B cell (primary cell): ENCODE measurements at regions of chr4 and their contacts with region 1.

Region 1: DNA sequence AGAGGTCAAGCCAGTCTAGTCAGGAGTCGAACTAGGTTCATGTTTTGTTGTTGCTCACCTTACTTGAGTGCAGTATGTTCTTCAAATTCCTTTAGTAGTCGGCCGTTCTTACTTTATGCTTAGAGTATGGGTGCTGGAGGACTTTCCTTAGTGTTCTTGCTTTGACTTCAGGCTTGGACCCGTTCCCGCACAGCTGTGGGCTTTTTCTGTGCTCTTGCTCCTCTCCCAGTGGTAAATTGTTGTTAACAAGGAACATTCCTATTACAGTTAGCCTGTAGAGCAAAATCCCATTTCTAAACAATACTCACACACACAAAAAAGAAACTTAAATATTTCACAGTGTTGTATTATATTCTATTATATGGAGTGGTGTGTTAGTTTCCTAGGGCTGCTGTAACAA is 113.5 kb downstream of the RAP1GDS1 start:
- DNase-seq: no peak
- ATAC-seq: no peak
- H3K4me3 ChIP-seq: no peak overlapping the region
- H3K4me3 Mint-ChIP-seq: no peak overlapping the region
- H3K27ac ChIP-seq: no peak overlapping the region
- H3K27ac Mint-ChIP-seq: no peak overlapping the region
- H3K4me1 ChIP-seq: peaks cover 0 to 5% of the 10 kb centered on the region in 2 donors
- H3K4me1 Mint-ChIP-seq: peaks cover 5% of the 10 kb centered on the region
- H3K27me3 ChIP-seq: no peaks in the 10 kb centered on the region
- H3K27me3 Mint-ChIP-seq: no peaks in the 10 kb centered on the region
- CTCF ChIP-seq: no peak

Region 2: DNA sequence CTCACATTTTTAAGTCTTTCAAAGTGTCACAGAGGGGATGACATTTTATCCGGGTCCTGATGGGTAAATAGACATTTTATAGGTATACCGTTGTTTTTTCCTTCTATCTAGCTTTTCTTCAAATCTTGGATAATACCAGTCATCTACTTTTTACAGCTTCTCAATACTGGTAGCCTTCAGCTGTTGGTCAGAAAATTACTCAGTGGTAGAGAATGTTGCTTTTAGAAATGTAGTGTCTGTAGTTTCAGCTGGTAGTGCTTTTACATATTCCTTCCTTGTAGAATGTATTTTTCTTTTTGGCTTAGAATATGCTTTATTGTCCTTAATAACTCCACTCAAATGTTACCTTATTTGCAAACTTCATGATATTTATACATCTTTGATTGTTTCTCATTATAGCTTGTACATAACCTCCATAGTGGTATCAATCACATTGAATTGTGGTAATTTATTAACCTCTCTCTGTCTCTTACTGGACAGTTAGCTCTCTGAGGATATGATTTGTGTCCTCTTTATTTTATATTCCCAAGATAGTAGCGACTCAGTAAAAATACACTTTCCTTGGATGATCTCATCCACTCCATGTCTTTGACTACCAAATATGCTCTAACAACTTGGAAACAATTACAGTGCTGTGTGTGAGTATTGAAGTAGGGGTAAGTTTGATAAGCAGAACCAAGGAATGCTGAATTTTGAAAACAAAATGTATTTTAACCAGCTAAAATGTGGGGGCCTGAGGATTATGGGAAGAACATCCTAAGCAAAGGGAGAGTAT is 59.7 kb before region 1 on chr4:
- CTCF ChIA-PET with region 1: no interaction called
- POLR2A ChIA-PET with region 1: no interaction called
- intact Hi-C with region 1: no loop called
- DNase-seq: no peak
- ATAC-seq: no peak
- H3K4me3 ChIP-seq: no peak overlapping the region
- H3K4me3 Mint-ChIP-seq: no peak overlapping the region
- H3K27ac ChIP-seq: no peak overlapping the region
- H3K27ac Mint-ChIP-seq: no peak overlapping the region
- H3K4me1 ChIP-seq: peaks cover 9% of the 10 kb centered on the region in 2 donors
- H3K4me1 Mint-ChIP-seq: no peaks in the 10 kb centered on the region
- H3K27me3 ChIP-seq: no peaks in the 10 kb centered on the region
- H3K27me3 Mint-ChIP-seq: no peaks in the 10 kb centered on the region
- CTCF ChIP-seq: no peak

Region 3: DNA sequence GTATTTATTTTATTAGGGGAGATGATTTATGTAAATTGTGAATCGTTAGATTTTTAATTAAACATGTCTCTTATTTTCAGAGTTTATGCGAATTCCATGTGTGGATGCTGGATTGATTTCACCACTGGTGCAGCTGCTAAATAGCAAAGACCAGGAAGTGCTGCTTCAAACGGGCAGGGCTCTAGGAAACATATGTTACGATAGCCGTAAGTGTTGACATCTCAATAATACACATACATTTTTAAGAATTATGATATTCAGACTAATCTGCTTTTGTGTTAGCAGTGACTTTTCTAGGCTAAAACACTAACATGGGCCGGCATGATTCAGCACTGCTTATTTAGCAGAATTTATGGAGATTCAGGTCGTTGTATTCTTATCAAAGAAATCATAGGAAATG is 22.2 kb before region 1 on chr4:
- CTCF ChIA-PET with region 1: no interaction called
- POLR2A ChIA-PET with region 1: interaction called, 10 read pairs
- intact Hi-C with region 1: no loop called
- DNase-seq: peak; percentile 8
- ATAC-seq: no peak
- H3K4me3 ChIP-seq: peak overlapping the region in 3 of 5 experiments; percentile 28 to 50 (median 37)
- H3K4me3 Mint-ChIP-seq: peak overlapping the region; percentile 75
- H3K27ac ChIP-seq: peak overlapping the region in 1 of 2 donors; percentile 50
- H3K27ac Mint-ChIP-seq: peak overlapping the region; percentile 8
- H3K4me1 ChIP-seq: peaks cover 0 to 10% of the 10 kb centered on the region in 2 donors
- H3K4me1 Mint-ChIP-seq: peaks cover 22% of the 10 kb centered on the region
- H3K27me3 ChIP-seq: no peaks in the 10 kb centered on the region
- H3K27me3 Mint-ChIP-seq: no peaks in the 10 kb centered on the region
- CTCF ChIP-seq: no peak